K562 (cell line): ENCODE measurements at regions of chr1 and their contacts with region 1.

Region 1: GRCh38 chr1:62436466-62437256 is at the start of gene USP1:
- DNase-seq: peak; percentile 95 to 98 (median 96)
- ATAC-seq: peak; percentile 86
- H3K4me3 ChIP-seq: peak within 1 kb of the TSS; percentile 89
- H3K27ac ChIP-seq: peak within 1 kb of the TSS; percentile 97
- H3K4me1 ChIP-seq: peaks cover 2 to 17% of the 10 kb centered on the region in 2 experiments; a peak in 4 of 5 replicates
- H3K27me3 ChIP-seq: peaks cover 0 to under 1% of the 10 kb centered on the region in 2 experiments; a peak in 1 of 5 replicates
- CTCF ChIP-seq: 0 out of 6 replicates have a peak, but pooled peaks of 1 of the 3 experiments have one; percentile 3
- EP300 ChIP-seq: no peak; the same call in 1 of the 2 replicates
- POLR2A ChIP-seq: peak; percentile 85
- RAD21 ChIP-seq: no peak
- polyA plus RNA-seq, gene USP1: 27.3 to 29.8 TPM

Region 2: DNA sequence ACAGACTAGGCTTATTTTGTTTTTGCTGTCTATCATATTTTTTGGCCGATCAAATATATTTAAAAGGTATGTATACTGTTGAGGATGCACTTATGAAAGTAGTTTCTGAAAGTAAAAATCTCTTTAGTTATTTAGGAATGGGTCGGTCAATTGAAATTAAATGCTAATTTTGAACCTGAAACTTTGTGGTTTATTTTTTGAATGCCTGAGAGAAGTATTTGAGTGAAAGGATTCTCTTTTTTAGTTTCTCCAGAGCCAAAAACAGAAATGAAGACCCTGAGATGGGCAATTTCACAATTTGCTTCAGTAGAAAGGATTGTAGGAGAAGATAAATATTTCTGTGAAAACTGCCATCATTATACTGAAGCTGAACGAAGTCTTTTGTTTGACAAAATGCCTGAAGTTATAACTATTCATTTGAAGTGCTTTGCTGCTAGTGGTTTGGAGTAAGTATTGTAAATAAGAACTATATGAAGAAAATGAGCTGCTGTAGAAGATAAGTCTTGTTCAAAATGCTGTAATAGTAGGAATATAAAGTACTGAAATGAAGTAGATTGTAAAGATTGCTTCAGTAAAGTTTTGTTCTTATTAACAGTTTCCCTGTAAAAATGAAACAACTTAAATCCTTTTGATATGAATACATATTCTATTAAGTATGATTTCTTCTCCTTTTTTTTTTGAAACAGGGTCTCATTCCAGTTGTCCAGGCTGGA is 11.7 kb after region 1 on chr1:
- CTCF ChIA-PET with region 1: no interaction called
- POLR2A ChIA-PET with region 1: interaction called, 12 read pairs
- in situ Hi-C with region 1: no loop called
- intact Hi-C with region 1: no loop called
- DNase-seq: no peak
- ATAC-seq: no peak
- H3K4me3 ChIP-seq: no peak overlapping the region
- H3K27ac ChIP-seq: no peak overlapping the region
- H3K4me1 ChIP-seq: no peaks in the 10 kb centered on the region
- H3K27me3 ChIP-seq: no peaks in the 10 kb centered on the region
- CTCF ChIP-seq: no peak
- EP300 ChIP-seq: no peak
- POLR2A ChIP-seq: no peak
- RAD21 ChIP-seq: no peak